ENCODE measurements at regions of chr20 and their contacts with region 1.

Region 1: GRCh38 chr20:25600632-25601031 is 15.3 kb upstream of the NINL start:
- DNase-seq: no peak
- ATAC-seq: peak in 2 of 8 donors; percentile 17 to 34
- H3K4me3 ChIP-seq: no peak overlapping the region
- H3K27ac ChIP-seq: no peak overlapping the region
- H3K4me1 ChIP-seq: no peaks in the 10 kb centered on the region
- H3K27me3 ChIP-seq: no peaks in the 10 kb centered on the region
- CTCF ChIP-seq: no peak

Region 2: GRCh38 chr20:25346349-25346748 is 254.3 kb before region 1 on chr20:
- intact Hi-C with region 1: no loop called
- DNase-seq: no peak
- ATAC-seq: no peak
- H3K4me3 ChIP-seq: no peak overlapping the region
- H3K27ac ChIP-seq: no peak overlapping the region
- H3K4me1 ChIP-seq: peaks cover 0 to 10% (median 3%) of the 10 kb centered on the region in 9 donors
- H3K27me3 ChIP-seq: no peaks in the 10 kb centered on the region
- CTCF ChIP-seq: no peak

Region 3: GRCh38 chr20:25549843-25550477 is 50.7 kb before region 1 on chr20:
- intact Hi-C with region 1: loop called in 1 of 10 experiments (anchors 5 kb)
- DNase-seq: no peak
- ATAC-seq: no peak
- H3K4me3 ChIP-seq: no peak overlapping the region
- H3K27ac ChIP-seq: no peak overlapping the region
- H3K4me1 ChIP-seq: peaks cover 0 to 9% (median 0%) of the 10 kb centered on the region in 9 donors
- H3K27me3 ChIP-seq: no peaks in the 10 kb centered on the region
- CTCF ChIP-seq: no peak

Region 4: DNA sequence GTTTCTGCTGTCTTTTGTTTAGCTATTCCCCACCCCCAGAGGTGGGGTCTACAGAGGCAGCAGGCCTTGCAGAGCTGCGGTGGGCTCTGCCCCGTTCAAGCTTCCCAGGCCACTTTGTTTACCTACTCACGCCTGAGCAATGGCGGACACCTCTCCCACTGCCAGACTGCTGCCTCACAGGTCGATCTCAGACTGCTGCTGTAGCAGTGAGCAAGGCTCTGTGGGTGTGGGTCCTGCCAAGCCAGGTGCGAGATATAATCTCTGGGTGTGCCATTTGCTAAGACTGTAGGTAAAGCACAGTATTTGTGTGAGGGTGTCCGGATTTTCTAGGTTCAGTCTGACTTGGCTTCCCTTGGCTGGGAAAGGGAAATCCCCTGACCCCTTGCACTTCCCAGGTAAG is 119.7 kb after region 1 on chr20:
- intact Hi-C with region 1: no loop called
- DNase-seq: no peak
- ATAC-seq: no peak
- H3K4me3 ChIP-seq: no peak overlapping the region
- H3K27ac ChIP-seq: no peak overlapping the region
- H3K4me1 ChIP-seq: peaks cover 0 to 10% (median 0%) of the 10 kb centered on the region in 9 donors
- H3K27me3 ChIP-seq: no peaks in the 10 kb centered on the region
- CTCF ChIP-seq: no peak

Measured in heart right ventricle (tissue), 16 donors.